Activated naive CD4-positive, alpha-beta T cell treated with anti-CD3 and anti-CD28 coated beads for 36 hours (primary cell): ENCODE measurements at regions of chr14 and their contacts with region 1.

Region 1: DNA sequence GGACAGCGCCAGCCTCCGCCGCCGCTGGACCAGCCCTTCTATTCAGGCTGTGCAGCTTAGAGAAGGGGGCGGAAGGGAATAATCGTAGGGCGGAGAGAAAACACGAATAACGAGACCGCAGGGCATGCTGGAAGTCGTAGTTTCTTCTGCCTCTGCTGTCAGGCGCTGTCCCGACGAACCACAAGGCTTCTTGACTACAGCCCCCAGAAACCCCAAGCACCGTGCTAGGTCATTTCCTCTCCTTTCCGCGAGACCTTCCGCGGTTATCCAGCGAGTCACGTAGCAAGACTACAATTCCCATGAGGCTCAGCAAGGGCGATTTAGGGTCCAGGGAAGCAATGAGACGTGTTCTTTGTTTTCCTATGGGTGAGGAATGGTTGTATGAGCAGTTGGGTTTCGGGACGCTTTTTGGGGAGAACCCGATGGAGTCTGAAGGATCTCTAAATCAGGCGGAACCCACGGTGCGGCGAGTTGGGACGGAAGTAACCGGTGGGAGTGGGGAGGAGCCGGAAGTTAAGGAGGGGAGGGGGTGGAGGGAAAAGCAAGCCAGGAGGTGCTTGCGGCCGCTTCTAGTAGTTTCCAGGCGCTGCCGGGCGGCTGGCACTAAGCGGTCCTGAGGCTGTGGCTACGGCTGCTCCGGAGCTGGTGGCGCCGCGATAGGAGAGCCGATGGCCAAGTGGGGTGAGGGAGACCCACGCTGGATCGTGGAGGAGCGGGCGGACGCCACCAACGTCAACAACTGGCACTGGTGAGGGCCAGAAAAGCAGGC is at the starts of genes AHSA1 and VIPAS39:
- DNase-seq: peak; percentile 98
- H3K4me3 Mint-ChIP-seq: peak within 1 kb of the TSS; percentile 100
- H3K27ac Mint-ChIP-seq: peak within 1 kb of the TSS; percentile 100
- H3K4me1 Mint-ChIP-seq: peaks cover 32% of the 10 kb centered on the region
- H3K27me3 Mint-ChIP-seq: no peaks in the 10 kb centered on the region
- total RNA-seq, gene AHSA1: 230 to 246 TPM
- total RNA-seq, gene VIPAS39: 12.3 to 13.3 TPM

Region 2: DNA sequence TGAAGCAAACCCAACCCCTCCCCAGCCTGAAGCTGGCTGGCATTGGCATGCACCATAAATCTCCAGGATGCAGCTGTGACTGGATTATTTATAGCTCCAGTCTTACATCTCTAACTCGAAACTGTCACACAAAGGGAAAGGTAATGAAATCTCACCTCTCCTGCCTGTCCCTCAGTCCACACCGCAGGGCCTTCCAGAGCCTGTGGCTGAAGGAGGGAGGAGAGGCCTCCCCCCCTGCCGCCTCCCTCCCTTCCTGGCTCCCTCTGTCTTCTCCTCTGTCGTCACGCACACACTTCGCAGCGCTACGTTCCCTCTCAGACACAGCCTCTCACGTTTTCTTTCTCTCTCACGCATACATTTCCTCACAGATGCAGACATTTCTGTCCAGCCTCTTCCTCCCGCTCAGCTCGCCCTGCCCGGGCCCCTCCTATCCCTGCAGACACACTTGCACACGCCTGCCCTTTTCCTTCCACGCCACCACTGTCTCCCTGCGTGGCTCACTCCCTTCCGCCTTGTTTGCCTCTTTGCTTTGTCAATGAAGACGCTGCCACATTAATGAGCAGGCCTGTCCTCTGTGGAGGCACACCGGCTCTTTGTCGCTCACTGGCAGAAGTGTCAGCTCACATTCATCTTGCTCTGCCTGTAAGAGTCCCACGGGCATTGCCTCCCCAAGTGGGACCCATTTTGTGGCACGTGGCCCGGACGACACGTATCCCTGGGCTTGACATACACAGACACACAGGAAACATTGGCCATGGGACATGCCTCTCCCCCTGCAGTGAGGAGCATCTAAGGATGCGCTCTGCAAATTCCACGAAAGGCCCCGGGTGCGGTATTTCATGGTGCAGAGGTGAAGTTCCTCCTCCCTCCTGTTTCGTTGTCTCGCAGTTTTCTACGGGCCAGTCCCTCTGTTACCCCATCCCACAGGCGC is 457.1 kb before region 1 on chr14:
- CTCF ChIA-PET with region 1: no interaction called
- intact Hi-C with region 1: no loop called
- DNase-seq: peak; percentile 54
- H3K4me3 Mint-ChIP-seq: peak overlapping the region; percentile 4
- H3K27ac Mint-ChIP-seq: no peak overlapping the region
- H3K4me1 Mint-ChIP-seq: peaks cover 18% of the 10 kb centered on the region
- H3K27me3 Mint-ChIP-seq: no peaks in the 10 kb centered on the region

Region 3: GRCh38 chr14:77376771-77377501 is 80.8 kb before region 1 on chr14 and contains the starts of genes SAMD15 and TMED8:
- CTCF ChIA-PET with region 1: no interaction called
- intact Hi-C with region 1: loop called (anchors 1 kb)
- DNase-seq: peak; percentile 84
- H3K4me3 Mint-ChIP-seq: peak within 1 kb of the TSS; percentile 90
- H3K27ac Mint-ChIP-seq: peak within 1 kb of the TSS; percentile 80
- H3K4me1 Mint-ChIP-seq: peaks cover 38% of the 10 kb centered on the region
- H3K27me3 Mint-ChIP-seq: no peaks in the 10 kb centered on the region
- total RNA-seq, gene SAMD15: 0.10 TPM in 1 of 2 experiments, not detected in the other
- total RNA-seq, gene TMED8: 21.5 to 21.7 TPM

Region 4: DNA sequence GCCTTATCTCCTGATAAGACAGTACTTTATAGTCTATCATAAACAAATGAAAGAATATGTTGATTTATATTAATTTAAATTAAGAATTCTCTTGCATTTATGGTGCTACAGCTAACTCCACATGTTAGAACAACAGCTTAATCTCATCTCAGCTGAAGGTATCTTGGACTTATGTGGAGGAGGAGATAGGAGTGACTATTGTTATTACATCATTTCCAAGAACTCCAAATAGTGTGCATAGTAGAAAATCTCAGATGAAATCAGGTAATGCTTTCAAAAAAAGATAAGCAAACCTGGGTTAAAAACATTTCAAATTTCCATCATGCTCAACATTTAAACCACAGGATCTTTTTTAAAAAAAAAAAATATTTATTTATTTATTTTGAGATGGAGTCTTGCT is 72.3 kb after region 1 on chr14:
- CTCF ChIA-PET with region 1: no interaction called
- intact Hi-C with region 1: no loop called
- DNase-seq: no peak
- H3K4me3 Mint-ChIP-seq: no peak overlapping the region
- H3K27ac Mint-ChIP-seq: no peak overlapping the region
- H3K4me1 Mint-ChIP-seq: no peaks in the 10 kb centered on the region
- H3K27me3 Mint-ChIP-seq: no peaks in the 10 kb centered on the region

Region 5: GRCh38 chr14:77554207-77554606 is 96.5 kb after region 1 on chr14:
- CTCF ChIA-PET with region 1: interaction called, 7 read pairs
- intact Hi-C with region 1: loop called (anchors 1 kb)
- DNase-seq: no peak
- H3K4me3 Mint-ChIP-seq: no peak overlapping the region
- H3K27ac Mint-ChIP-seq: peak overlapping the region; percentile 58
- H3K4me1 Mint-ChIP-seq: peaks cover 12% of the 10 kb centered on the region
- H3K27me3 Mint-ChIP-seq: no peaks in the 10 kb centered on the region

Region 6: GRCh38 chr14:77641534-77642341 is 184.0 kb after region 1 on chr14:
- CTCF ChIA-PET with region 1: no interaction called
- intact Hi-C with region 1: loop called (anchors 1 kb)
- DNase-seq: peak; percentile 79
- H3K4me3 Mint-ChIP-seq: peak overlapping the region; percentile 84
- H3K27ac Mint-ChIP-seq: peak overlapping the region; percentile 84
- H3K4me1 Mint-ChIP-seq: peaks cover 17% of the 10 kb centered on the region
- H3K27me3 Mint-ChIP-seq: no peaks in the 10 kb centered on the region

Region 7: DNA sequence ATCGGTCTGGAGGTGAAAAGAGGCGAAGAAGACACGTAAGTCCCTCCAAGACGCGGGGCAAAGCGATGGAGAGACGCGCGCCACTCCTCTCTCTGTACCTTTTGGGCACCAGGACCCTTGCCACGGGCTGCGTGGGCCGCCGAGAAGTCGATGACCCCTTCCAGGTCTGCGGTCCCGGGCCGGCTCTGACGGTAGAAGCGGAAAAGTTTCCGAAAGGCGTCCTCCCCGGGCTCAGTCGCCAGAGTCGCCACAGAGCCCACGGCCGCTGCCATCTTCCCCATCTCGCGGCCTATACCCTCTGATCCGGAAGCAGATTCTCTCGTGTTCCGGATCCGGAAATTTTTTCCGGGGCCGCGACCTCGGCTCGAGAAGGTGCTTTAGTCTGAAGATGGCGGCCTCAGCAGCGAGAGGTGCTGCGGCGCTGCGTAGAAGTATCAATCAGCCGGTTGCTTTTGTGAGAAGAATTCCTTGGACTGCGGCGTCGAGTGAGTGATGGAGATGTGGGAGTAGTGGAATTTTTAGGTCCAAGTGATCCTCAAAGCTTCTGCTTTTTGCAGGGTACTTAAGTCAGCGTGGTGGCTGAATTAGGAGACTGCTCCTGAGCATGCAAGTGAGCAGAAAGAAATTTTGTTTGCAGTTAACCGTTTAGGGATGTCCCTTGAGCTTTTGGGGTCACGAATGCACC is 250.2 kb after region 1 on chr14 and contains the starts of genes ALKBH1 and SLIRP:
- CTCF ChIA-PET with region 1: interaction called, 5 read pairs
- intact Hi-C with region 1: loop called (anchors 1 kb)
- DNase-seq: peak; percentile 92
- H3K4me3 Mint-ChIP-seq: peak within 1 kb of the TSS; percentile 87
- H3K27ac Mint-ChIP-seq: peak within 1 kb of the TSS; percentile 88
- H3K4me1 Mint-ChIP-seq: peaks cover 48% of the 10 kb centered on the region
- H3K27me3 Mint-ChIP-seq: no peaks in the 10 kb centered on the region
- total RNA-seq, gene ALKBH1: 13.5 to 14.5 TPM
- total RNA-seq, gene SLIRP: 134 to 149 TPM

Region 8: DNA sequence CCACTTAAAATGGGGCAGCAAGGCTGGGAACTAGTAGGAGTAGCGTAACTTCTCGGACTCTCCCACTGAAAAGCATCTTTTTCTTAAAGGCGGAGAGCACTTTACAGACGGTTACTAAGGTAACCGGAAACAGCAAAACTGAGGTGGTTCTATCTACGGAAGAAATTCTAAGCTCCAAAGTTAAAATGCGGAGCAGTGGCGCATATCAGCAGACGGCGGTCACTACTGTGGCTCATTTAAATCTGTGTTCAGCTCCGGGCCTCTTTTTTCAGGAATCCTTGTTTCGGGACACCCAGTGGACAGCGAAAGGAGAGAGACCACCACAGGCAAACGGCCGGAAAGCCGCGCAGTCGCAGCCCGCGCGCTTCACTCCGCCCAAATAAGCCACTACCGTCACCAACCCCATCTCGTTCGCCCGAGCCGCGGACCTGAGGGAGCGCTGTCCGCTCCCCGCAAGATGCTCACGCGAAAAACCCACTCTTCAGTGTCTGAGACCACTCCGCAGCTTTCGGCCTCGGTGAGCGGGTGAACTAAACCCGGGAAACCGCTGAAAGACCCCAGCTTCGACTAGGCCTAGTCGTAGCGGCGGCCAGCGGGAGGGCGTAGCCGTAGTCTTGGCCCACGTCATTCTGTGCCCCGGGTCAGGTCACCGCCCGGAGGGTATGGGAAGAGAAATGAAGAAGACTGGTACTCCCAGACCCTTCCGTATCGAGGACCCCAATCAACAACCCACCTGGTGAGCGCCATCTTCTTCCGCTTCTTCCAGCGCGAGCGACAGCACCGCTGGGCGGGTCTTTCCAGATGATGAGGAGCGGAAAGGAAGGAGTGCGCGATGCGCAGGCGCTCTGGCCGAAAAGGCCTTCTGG is 302.9 kb after region 1 on chr14 and contains the start of gene SNW1:
- CTCF ChIA-PET with region 1: no interaction called
- intact Hi-C with region 1: loop called (anchors 1 kb)
- DNase-seq: peak; percentile 95
- H3K4me3 Mint-ChIP-seq: peak within 1 kb of the TSS; percentile 94
- H3K27ac Mint-ChIP-seq: peak within 1 kb of the TSS; percentile 95
- H3K4me1 Mint-ChIP-seq: peaks cover 32% of the 10 kb centered on the region
- H3K27me3 Mint-ChIP-seq: no peaks in the 10 kb centered on the region
- total RNA-seq, gene SNW1: 117 to 129 TPM